Activated T-helper 1 cell treated with anti-CD3 and anti-CD28 coated beads, Interleukin-12 subunit alpha, Interleukin-12 subunit beta, Interleukin-2, Interleukin-4 antibody, amounts not matched to agents 30 ng/mL and 10 ng/mL and 1 ng/mL, durations not matched to agents 14 hours and 24 hours and 36 hours (primary cell): ENCODE measurements at regions of chr19 and their contacts with region 1.

Region 1: DNA sequence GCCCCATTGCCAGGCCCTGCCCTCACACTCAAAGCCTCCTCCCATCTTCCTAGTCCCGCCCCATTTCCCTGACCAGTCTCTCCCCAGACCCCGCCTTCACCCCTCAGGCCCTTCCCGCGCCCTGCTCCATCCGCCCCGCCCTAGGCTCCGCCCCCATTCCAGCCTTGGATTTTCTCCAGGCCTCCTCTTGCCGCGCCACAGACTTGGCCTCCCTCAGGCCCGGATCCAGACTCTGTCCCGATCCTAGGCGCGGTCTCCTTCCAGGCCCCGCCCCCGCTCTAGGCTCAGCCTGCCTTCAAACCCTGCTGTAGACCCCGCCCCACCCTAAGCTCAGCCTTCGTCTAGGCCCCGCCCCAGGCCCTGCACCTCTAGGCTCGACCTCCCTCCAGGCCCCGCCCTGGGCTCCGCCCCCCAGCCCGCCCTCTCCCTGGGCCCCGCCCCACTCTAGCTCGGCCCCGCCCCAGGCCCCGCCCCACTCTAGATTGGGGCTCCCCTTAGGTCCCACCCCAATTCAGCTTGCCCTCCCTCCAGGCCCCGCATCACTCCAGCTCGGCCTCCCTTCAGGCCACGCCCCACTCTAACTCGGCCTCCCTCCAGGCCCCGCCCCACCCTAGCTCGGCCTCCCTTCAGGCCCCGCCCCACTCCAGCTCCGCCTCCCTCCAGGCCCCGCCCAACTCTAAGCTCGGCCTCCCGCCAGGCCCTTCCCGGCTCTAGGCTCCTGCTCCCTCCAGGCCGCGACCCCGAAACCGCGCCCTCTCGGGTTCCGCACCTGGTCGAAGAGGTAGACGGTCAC is 18.5 kb downstream of the LMTK3 start:
- DNase-seq: peak; percentile 82
- H3K4me3 Mint-ChIP-seq: peak overlapping the region; percentile 68
- H3K27ac Mint-ChIP-seq: peak overlapping the region; percentile 29
- H3K4me1 Mint-ChIP-seq: peaks cover 27% of the 10 kb centered on the region
- H3K27me3 Mint-ChIP-seq: peaks cover 21% of the 10 kb centered on the region

Region 2: DNA sequence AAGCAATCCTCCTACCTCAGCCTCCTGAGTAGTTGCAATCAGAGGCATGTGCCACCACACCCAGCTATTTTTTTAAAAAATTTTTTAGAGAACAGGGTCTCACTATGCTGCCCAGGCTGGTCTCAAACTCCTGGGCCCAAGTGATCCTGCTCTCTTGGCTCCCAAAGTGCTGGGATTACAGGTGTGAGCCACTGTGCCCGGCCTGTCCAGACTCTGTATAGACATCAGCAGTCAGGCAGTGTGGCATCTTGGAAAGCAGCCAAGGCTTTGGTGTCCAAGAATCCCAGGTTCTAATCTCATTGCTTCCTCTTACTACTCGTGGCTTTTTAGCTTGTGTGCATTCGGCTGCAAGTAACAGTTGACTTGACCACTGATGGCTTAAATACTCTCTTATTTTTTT is 840.8 kb before region 1 on chr19:
- intact Hi-C with region 1: no loop called
- DNase-seq: no peak
- H3K4me3 Mint-ChIP-seq: no peak overlapping the region
- H3K27ac Mint-ChIP-seq: no peak overlapping the region
- H3K4me1 Mint-ChIP-seq: peaks cover 5% of the 10 kb centered on the region
- H3K27me3 Mint-ChIP-seq: no peaks in the 10 kb centered on the region

Region 3: DNA sequence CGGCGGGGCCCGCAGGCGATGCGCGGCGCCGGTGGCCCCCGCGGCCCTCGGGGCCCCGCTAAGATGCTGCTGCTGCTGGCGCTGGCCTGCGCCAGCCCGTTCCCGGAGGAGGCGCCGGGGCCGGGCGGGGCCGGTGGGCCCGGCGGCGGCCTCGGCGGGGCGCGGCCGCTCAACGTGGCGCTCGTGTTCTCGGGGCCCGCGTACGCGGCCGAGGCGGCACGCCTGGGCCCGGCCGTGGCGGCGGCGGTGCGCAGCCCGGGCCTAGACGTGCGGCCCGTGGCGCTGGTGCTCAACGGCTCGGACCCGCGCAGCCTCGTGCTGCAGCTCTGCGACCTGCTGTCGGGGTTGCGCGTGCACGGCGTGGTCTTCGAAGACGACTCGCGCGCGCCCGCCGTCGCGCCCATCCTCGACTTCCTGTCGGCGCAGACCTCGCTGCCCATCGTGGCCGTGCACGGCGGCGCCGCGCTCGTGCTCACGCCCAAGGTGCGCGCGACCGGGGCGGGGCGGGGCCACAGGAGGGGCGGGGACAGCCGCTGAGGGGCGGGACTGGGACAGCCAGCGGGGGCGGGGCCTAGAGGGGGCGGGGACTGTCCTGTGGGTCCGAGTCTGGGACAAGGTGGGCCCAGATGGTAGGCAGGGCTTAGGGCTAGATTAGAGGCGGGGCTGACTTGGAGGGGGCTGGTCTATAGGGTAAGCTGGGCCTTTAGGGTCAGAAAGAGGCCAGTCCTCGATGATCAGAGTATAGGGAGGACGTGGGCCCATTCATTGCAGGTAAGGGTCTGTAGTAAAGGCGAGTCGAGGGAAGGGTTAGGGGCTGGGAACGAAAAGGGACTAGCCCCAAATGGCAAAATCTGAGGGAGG is 94.5 kb before region 1 on chr19:
- intact Hi-C with region 1: loop called (anchors 1 kb)
- DNase-seq: peak; percentile 84
- H3K4me3 Mint-ChIP-seq: peak overlapping the region; percentile 53
- H3K27ac Mint-ChIP-seq: peak overlapping the region; percentile 34
- H3K4me1 Mint-ChIP-seq: peaks cover 31% of the 10 kb centered on the region
- H3K27me3 Mint-ChIP-seq: peaks cover 39% of the 10 kb centered on the region

Region 4: DNA sequence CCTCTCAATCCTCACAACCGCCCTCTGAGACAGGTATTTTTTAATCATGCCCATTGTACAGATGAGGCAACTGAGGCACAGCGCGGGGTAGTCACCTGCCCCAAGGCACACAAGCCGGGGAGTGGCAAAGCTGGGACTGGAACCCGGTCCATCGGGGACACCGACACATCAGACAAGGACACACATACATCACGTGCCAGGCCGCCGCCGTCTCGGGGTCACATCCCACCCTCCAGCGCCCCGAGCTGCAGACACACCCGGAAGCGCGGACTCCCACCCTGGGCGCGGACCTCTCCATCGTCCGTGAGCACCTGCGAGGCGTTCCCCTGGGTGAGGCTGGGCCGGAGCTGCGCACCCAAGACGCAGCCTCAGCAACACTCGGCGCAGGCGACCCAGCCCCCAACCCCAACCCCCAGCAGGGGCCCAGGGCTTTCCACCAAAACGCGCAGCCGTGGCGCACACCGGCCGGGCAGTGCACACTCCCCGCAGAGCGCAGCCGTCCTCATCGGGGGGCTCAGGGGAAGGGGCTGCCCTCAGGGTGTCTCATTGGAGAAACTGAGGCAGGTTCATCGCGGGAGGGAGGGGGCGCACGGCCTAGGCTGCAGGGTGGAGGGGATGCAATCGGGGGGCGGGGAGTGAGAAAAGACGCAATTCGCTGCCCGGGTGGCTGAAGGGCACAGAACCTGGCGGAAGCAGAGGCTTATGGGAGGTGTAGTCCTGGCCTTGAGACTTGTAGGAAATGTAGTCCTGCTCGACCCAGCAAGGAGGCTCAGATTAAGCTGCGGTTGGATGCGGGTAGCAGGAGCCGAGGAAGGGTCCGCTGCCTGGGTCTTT is 20.4 kb after region 1 on chr19:
- intact Hi-C with region 1: loop called (anchors 1 kb)
- DNase-seq: peak; percentile 64
- H3K4me3 Mint-ChIP-seq: no peak overlapping the region
- H3K27ac Mint-ChIP-seq: peak overlapping the region; percentile 46
- H3K4me1 Mint-ChIP-seq: peaks cover 14% of the 10 kb centered on the region
- H3K27me3 Mint-ChIP-seq: peaks cover 3% of the 10 kb centered on the region

Region 5: DNA sequence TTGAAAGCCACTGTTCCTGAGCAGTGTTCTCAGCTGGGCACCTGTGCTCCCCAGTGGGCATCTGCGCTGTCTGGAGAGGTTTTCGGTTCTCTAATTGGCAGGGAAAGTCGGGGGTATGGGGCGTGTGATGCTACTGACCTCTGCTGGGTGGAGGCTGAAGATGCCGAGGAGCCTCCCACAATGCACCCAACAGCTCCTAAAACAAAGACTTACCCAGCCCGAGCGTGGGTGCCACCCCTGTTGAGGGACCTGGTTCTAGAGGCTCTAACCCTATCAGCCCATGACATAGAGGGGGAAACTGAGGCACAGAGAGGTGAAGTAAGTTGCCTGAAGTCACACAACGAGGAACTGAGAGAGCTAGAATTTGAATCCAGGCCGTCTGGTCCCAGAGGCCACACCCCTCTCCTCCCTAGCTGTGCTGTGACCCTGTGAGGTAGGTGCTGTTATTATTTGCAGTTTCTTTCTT is 115.7 kb after region 1 on chr19:
- intact Hi-C with region 1: loop called (anchors 1 kb)
- DNase-seq: peak; percentile 40
- H3K4me3 Mint-ChIP-seq: no peak overlapping the region
- H3K27ac Mint-ChIP-seq: no peak overlapping the region
- H3K4me1 Mint-ChIP-seq: no peaks in the 10 kb centered on the region
- H3K27me3 Mint-ChIP-seq: no peaks in the 10 kb centered on the region

Region 6: DNA sequence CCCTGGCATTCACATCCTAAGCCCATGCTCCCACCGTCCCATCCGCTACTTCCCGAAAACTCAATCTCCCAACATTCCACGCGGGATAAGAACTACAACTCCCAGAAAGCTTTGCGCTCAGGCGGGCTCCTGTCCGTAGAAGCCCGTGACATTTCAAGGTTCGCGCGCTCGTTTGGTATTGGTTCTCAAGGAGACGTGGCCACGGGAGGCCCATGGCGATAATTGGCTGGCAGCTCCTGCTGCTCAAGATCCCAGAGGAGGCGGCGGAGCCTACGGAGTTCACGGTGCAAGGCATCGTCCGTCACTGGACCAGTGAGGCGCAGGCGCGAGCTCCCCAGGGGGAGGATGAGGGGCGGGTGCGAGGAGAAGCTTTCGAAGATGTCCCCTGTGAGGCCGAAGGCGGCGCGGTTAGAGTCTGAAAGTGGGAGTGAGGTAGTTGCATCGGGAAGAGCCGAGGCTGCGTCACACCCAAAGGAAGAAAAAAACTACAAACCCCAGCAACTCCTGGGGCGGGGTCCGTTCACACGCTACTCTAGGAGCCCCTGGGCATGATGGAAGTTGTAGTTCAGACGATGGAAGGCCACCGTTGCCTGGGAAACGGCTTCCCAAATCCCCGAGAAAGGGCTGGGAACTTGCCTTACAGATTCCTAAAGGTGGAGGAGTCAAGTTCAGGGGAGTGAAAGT is 227.6 kb after region 1 on chr19:
- intact Hi-C with region 1: loop called (anchors 1 kb)
- DNase-seq: peak; percentile 91
- H3K4me3 Mint-ChIP-seq: peak overlapping the region; percentile 92
- H3K27ac Mint-ChIP-seq: peak overlapping the region; percentile 98
- H3K4me1 Mint-ChIP-seq: peaks cover 23% of the 10 kb centered on the region
- H3K27me3 Mint-ChIP-seq: no peaks in the 10 kb centered on the region